Head of caudate nucleus (tissue), 42 donors: ENCODE measurements at regions of chr3 and their contacts with region 1.

Region 1: GRCh38 chr3:134373994-134374790 is at the start of gene AMOTL2:
- DNase-seq: peak; percentile 44 to 91 (median 84)

Region 2: DNA sequence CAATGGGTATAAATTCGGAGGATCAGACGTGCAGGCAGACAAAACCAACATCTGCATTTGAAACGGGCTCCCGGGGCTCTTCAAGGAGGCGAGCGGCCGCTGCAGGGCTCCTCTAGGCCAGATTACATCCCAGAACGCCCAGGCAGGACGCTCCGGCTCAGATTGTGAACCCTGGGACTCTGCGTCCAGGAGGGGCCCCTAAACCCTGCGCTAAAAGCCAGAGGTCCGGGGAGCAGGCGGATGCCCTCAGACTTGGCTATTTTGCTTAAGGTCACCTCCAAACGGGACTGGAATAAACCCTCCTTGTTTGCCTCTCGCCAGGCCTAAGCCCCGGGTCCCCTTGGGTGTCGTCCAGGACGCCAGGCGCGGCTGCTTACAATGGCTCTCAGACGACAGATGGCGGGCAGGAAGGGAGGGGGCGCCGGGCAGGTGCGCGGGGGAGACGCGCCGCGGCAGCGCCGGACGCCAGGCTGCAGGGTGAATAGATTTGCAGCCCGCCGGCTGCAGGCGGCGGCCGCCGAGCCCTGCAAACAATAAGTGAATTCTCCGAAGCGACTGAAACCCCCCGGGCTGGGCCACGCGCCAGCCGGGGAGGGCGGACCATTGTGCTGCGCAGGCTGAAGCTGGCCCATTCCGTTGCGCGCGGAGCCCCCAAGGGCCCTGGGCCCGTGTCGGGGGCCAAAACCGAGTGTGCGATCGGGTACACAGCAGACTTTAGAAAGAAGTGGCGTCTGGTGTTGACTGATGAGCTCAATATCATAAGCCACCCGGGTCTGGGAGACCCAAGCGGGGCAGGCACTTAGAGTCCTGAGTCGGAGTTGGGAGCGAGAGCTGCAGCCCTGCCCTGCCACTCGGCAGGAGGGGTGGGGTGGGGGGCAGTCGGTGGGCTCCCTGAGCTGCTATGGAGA is 32.4 kb after region 1 on chr3:
- intact Hi-C with region 1: loop called (anchors 5 kb)
- DNase-seq: peak; percentile 73 to 94 (median 88)

Region 3: DNA sequence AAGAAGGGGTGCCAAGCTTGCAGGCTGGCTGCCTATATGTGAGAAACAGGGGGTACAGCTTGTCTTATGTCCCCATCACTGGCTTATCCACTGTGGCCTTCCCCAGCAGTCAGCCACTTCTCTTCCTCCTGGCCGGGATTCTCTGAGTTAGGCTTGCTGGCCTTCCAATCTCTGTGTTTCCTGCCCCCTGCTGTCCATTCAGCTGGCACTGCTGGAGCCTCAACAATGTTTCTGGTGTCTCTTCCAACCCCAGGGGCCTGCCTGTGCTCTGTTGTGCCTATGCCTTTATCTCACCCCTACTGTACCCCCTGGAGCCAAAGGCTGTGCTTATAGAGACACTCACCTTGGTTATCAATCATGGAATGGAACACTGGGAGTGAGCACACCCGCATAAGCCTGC is 75.1 kb after region 1 on chr3:
- intact Hi-C with region 1: loop called (anchors 5 kb)
- DNase-seq: peak; percentile 37 to 89 (median 75)